ENCODE measurements at regions of chr9 and their contacts with region 1.

Region 1: DNA sequence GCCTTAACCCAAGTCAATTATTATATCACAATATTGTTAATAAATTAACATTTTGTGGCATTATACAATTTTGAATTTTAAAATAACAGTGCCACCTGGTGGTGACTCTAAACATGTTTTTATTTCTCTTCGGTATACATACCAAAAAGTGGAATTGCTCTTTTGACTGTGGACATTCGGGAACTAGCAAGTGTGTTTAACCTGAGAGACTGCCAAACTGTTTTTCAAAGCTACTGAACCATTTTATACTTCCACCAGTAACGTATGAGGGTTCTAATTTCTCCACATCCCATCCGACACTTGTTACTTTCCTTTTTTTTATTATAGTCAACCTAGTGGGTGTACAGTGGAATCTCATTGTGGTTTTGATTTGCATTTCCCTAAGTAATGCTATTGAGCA is 18.3 kb upstream of the HSDL2 start:
- DNase-seq: peak; percentile 12
- H3K4me3 Mint-ChIP-seq: no peak overlapping the region
- H3K27ac Mint-ChIP-seq: no peak overlapping the region
- H3K4me1 Mint-ChIP-seq: no peaks in the 10 kb centered on the region
- H3K27me3 Mint-ChIP-seq: no peaks in the 10 kb centered on the region
- CTCF ChIP-seq: no peak

Region 2: DNA sequence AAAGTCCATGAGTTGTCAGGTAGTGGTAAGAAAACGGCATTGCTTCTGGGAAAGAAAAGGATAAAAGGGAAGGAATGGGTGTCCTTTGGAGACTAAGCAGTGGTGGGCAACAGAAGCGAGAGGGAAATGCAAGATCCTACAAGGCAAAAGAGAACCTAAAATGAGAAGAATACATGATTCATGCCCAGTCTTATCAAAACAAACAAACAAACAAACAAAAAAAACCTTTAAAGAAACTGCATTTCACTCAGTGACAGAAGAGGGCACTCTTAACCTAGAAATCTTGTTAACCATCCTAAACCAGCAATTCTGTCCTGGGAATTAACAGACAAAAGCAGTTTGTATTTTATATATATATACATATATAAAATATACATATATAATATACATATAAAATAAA is 275.0 kb before region 1 on chr9:
- CTCF ChIA-PET with region 1: interaction called, 4 read pairs
- intact Hi-C with region 1: loop called (anchors 2 kb)
- DNase-seq: no peak
- H3K4me3 Mint-ChIP-seq: no peak overlapping the region
- H3K27ac Mint-ChIP-seq: no peak overlapping the region
- H3K4me1 Mint-ChIP-seq: peaks cover 9% of the 10 kb centered on the region
- H3K27me3 Mint-ChIP-seq: no peaks in the 10 kb centered on the region
- CTCF ChIP-seq: no peak

Region 3: DNA sequence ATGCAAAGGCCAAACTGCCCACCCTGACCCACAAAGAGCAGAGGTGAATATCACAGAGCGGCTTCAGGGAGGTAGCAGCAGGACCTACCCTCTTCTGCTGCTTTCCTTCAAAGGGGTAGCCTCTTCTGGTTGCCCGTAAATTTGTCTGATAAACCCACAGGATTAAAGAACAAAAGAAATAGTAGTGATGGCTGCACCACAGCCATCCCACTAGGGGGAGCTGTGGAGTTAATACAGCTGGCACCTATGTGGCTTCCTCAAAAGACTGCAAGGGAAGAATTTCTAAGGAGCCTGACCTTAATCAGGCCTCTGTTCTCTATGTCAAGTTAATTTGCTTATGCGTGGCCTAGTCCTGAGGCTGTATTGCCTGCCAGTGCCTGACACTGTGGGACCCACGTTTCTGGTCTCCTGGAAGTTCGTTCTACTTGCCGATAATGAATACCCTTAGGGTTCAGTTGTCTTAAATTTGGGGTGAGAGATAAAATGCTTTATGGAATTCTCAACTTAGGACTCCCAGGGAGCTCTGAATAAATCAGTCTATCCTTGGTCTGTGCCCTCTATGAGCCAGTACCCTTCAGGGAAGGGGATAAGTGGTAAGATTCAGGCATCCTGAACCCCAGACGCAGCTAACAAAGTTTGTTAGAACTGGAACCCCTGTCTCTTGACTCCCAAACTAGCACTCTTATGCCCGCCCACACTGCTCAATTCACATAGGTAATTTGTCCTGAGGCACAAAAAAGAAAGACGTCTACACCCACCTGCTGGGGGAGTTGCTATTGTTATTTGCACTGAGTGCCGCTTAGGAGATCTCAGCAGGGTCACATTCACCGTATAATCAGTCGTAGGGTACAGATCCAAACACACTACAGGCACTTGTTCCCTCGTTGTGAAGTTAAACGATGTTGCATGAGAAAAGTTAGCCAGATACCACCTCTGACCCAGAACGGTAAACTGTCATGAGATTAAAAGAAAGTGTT is 263.6 kb before region 1 on chr9:
- CTCF ChIA-PET with region 1: interaction called, 3 read pairs
- intact Hi-C with region 1: loop called (anchors 2 kb)
- DNase-seq: peak; percentile 78
- H3K4me3 Mint-ChIP-seq: no peak overlapping the region
- H3K27ac Mint-ChIP-seq: no peak overlapping the region
- H3K4me1 Mint-ChIP-seq: peaks cover 10% of the 10 kb centered on the region
- H3K27me3 Mint-ChIP-seq: no peaks in the 10 kb centered on the region
- CTCF ChIP-seq: peak; percentile 57

Measured in Calu3 (cell line).